ENCODE measurements at regions of chrX and their contacts with region 1.

Region 1: GRCh38 chrX:23554304-23554703 is 113.0 kb upstream of the PRDX4 start:
- DNase-seq: peak; percentile 68
- ATAC-seq: peak; percentile 37
- H3K4me3 ChIP-seq: no peak overlapping the region
- H3K27ac ChIP-seq: no peak overlapping the region
- H3K4me1 ChIP-seq: no peaks in the 10 kb centered on the region
- H3K27me3 ChIP-seq: peaks cover 41% of the 10 kb centered on the region; the same call in 1 of the 2 replicates
- CTCF ChIP-seq: peak; percentile 76

Region 2: GRCh38 chrX:23008431-23009099 is 545.7 kb before region 1 on chrX:
- CTCF ChIA-PET with region 1: no interaction called
- POLR2A ChIA-PET with region 1: no interaction called
- intact Hi-C with region 1: loop called (anchors 5 kb)
- DNase-seq: peak; percentile 62
- ATAC-seq: peak; percentile 88
- H3K4me3 ChIP-seq: no peak overlapping the region; the same call in 1 of the 2 replicates
- H3K27ac ChIP-seq: no peak overlapping the region
- H3K4me1 ChIP-seq: no peaks in the 10 kb centered on the region
- H3K27me3 ChIP-seq: no peaks in the 10 kb centered on the region
- CTCF ChIP-seq: peak; percentile 73

Region 3: GRCh38 chrX:23341452-23341851 is 212.9 kb before region 1 on chrX:
- CTCF ChIA-PET with region 1: no interaction called
- POLR2A ChIA-PET with region 1: no interaction called
- intact Hi-C with region 1: loop called (anchors 10 kb)
- DNase-seq: peak; percentile 35
- ATAC-seq: no peak
- H3K4me3 ChIP-seq: no peak overlapping the region
- H3K27ac ChIP-seq: no peak overlapping the region
- H3K4me1 ChIP-seq: 0 out of 2 replicates have a peak, but pooled peaks cover 5% of the 10 kb centered on the region
- H3K27me3 ChIP-seq: peaks cover 48% of the 10 kb centered on the region
- CTCF ChIP-seq: no peak

Region 4: DNA sequence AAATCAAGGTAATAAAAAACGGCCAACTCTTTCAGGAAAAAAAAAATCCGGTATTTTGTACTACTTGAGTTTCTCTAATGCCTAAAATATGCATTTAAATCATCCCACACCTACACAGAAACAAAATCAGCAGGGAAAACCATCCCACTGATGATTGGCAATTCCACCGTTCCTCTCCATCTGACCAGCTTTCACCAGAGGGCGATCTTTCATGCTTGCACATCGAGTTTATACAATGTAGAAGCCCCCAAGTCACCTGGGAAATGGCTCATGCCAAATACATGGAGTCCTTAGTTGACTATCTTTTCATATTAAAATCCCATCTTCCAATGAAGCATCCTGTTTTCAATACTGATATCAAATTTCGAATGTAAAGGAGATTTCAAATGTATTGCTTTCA is 150.5 kb before region 1 on chrX:
- CTCF ChIA-PET with region 1: no interaction called
- POLR2A ChIA-PET with region 1: no interaction called
- intact Hi-C with region 1: loop called (anchors 1 kb)
- DNase-seq: peak; percentile 30
- ATAC-seq: 0 out of 2 replicates have a peak, but pooled peaks have one; percentile 33
- H3K4me3 ChIP-seq: no peak overlapping the region
- H3K27ac ChIP-seq: no peak overlapping the region
- H3K4me1 ChIP-seq: no peaks in the 10 kb centered on the region
- H3K27me3 ChIP-seq: peaks cover 8% of the 10 kb centered on the region; the same call in 1 of the 2 replicates
- CTCF ChIP-seq: peak; percentile 64

Measured in PC-3 (cell line).